H1 (cell line): ENCODE measurements at regions of chr2 and their contacts with region 1.

Region 1: DNA sequence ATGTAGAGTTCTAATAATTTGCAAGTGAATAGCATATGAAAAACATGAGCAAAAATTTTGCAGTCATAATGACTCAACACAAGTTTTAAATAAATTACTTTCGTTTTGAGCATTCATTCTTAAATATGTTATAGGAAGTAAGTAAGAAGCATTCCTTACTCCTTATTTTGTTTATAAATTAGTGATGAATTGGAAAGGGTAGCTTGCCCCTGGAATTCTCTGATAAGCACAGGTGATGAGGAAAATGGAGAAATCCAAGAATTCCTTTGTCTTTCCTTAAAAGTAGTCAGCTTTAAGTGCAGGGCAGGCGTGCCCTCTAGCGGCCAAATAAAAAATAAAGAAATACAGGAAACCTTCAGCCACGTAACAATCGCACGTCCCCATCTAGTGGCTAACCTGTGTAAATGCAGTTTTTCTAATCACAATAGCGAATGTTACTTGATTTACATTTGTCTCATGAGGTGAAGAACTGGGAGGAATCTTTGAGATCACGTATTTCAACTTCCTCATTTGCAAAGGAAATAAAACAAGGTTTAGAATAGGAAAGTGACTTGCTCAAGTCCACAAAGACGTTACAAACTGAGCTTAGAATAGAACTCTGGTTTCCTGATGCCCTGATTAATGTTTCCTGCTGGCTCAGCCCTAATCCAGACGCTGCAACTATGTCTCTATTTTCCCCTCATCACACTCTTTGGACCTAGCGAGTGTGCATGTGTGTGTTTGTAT is 47.2 kb upstream of the ZNG1B start:
- DNase-seq: peak in 1 of 2 experiments; percentile 62
- H3K4me3 ChIP-seq: no peak overlapping the region
- H3K27ac ChIP-seq: no peak overlapping the region
- H3K4me1 ChIP-seq: no peaks in the 10 kb centered on the region
- H3K27me3 ChIP-seq: no peaks in the 10 kb centered on the region
- CTCF ChIP-seq: peak in 2 of 3 experiments; percentile 84 to 99; a peak in 3 of 4 replicates
- EP300 ChIP-seq: no peak
- POLR2A ChIP-seq: no peak
- RAD21 ChIP-seq: peak; percentile 84 to 85

Region 2: DNA sequence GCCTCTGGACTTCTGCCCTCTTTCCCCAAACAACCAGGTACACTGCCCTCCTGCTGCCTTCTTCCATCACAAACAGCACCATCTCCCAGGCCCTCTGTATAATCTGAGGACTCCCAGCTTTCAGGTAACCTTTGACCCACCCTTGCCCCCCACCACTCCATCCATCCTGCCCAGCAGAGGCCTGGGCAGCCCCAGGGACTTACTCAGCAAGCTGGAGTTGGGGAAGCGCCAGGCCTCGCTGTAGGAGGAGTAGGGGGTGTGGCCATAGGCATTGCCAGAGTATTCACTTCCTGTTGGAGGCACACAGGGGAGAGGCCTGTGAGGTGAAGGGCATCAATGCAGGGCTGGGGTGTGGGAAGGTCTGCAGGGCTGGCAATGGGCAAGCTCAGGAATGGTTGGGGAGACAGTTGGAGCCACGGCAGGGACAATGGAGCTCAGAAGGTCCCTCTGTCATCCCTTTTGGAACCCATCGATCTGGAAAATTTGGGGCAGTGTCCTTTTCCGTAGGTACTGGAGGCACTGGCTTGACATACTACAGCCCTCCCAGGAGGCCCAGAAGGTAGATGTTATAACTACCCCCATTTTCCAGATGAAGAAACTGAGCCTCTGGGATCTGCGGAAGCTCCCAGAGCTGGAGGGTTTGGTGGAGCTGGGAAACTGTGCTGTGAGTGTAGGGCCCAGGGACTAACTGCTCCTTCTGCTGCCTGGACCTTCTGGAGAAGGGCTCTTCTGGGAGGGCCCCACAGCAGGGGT is 170.2 kb before region 1 on chr2:
- CTCF ChIA-PET with region 1: interaction called, 16 read pairs
- POLR2A ChIA-PET with region 1: no interaction called
- DNase-seq: no peak
- H3K4me3 ChIP-seq: no peak overlapping the region
- H3K27ac ChIP-seq: no peak overlapping the region
- H3K4me1 ChIP-seq: peaks cover 0 to 5% (median 4%) of the 10 kb centered on the region in 4 experiments; a peak in 4 of 7 replicates
- H3K27me3 ChIP-seq: no peaks in the 10 kb centered on the region
- CTCF ChIP-seq: no peak
- EP300 ChIP-seq: no peak
- POLR2A ChIP-seq: no peak
- RAD21 ChIP-seq: no peak

Region 3: GRCh38 chr2:113351375-113352355 is 38.6 kb before region 1 on chr2:
- CTCF ChIA-PET with region 1: no interaction called
- POLR2A ChIA-PET with region 1: no interaction called
- DNase-seq: no peak
- H3K4me3 ChIP-seq: no peak overlapping the region
- H3K27ac ChIP-seq: no peak overlapping the region
- H3K4me1 ChIP-seq: no peaks in the 10 kb centered on the region
- H3K27me3 ChIP-seq: no peaks in the 10 kb centered on the region; a peak in 1 of 7 replicates
- CTCF ChIP-seq: no peak
- EP300 ChIP-seq: no peak
- POLR2A ChIP-seq: no peak
- RAD21 ChIP-seq: no peak

Region 4: DNA sequence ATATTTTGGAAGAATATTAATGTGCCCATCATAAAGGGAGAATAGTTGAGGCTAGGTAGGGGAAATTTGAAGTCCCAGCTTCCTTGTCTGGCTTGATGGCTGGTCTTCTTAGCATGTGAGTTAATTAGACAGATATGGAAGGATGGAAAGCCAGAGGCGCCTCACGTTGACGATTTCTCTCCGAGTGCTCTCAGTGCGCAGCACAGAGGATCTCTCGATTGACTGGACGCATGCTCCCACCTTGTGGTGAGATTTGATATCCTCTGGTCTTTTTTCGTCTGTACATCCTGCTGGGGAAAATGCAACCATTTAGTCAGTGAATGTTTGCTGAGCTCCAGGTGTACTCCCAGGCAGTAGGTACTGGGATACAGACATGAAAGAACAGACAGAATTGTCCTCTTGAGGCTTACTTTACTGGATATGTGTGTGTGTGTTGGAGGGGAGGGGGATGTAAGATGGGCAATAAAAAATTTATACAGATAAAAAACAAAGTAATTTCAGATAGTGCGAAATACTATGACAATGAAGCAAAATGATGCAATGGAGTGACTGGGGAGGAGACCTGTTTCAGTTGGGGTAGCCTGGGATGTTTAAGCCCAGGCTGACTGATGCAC is 19.7 kb before region 1 on chr2:
- CTCF ChIA-PET with region 1: interaction called, 12 read pairs
- POLR2A ChIA-PET with region 1: no interaction called
- DNase-seq: peak; percentile 9 to 66
- H3K4me3 ChIP-seq: no peak overlapping the region
- H3K27ac ChIP-seq: no peak overlapping the region
- H3K4me1 ChIP-seq: no peaks in the 10 kb centered on the region
- H3K27me3 ChIP-seq: no peaks in the 10 kb centered on the region
- CTCF ChIP-seq: peak; percentile 41 to 81 (median 75)
- EP300 ChIP-seq: no peak
- POLR2A ChIP-seq: no peak
- RAD21 ChIP-seq: peak; percentile 87 to 88